Activated CD4-positive, alpha-beta memory T cell treated with anti-CD3 and anti-CD28 coated beads for 36 hours (primary cell): ENCODE measurements at regions of chr15 and their contacts with region 1.

Region 1: DNA sequence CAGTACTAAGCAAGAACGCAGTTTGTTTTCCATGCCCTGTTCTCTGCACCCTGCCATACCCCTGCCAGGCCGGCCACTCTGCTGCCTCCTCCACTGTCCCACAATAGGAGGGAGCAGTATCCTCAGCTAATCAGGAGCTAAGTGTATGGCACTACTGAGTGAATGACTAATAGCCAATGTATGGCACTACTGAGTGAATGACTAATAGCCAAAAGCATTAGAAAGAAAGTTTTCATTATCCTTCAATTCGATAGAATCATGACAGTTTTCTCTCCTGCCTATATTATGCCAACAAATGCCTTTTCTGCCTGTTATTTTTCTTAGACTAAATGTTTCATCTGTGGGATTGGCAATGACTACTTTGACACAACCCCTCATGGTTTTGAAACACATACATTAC is 107.5 kb upstream of the CHRM5 start:
- DNase-seq: no peak
- H3K4me3 Mint-ChIP-seq: no peak overlapping the region
- H3K27ac Mint-ChIP-seq: no peak overlapping the region
- H3K4me1 Mint-ChIP-seq: peaks cover 3% of the 10 kb centered on the region
- H3K27me3 Mint-ChIP-seq: no peaks in the 10 kb centered on the region

Region 2: DNA sequence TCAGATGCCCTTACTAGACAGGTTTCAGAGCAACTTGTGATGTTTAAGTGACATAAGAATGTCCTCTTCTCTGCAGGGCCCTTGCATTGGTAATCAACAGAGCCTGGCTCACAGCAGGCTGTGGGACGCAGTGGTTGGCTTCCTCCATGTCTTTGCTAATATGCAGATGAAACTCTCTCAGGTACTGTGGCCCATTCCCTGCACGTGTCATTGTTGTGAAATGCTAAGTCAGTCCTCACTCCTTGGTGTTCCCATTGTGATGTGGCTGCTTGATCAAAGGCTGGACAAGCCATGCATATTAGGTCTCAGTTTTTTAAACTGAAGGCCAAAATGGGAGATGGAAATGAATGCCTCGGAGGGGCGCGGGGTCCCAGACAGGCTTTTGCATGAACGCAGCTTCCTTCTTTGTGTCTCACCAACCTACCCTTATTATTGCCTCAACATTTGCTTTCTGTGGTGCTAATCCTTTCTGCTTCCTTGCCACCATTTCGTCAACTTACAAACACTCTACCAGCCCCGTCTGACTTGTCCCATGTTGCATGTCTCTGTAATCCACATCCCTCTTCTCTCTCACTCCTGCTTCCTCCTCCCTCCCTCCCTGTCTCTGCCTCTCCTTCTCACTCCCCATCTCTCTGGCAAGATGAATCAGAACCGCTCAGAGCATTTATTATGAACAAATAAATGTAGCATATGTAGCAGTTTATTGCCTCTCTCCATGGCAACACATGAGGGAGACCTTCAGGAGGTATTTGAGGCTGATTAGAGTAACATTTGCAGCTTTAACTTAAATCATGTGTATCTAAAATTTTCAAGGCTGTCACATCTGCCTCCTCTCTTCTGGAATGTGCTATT is 25.6 kb before region 1 on chr15:
- CTCF ChIA-PET with region 1: no interaction called
- POLR2A ChIA-PET with region 1: no interaction called
- intact Hi-C with region 1: no loop called
- DNase-seq: no peak
- H3K4me3 Mint-ChIP-seq: no peak overlapping the region
- H3K27ac Mint-ChIP-seq: no peak overlapping the region
- H3K4me1 Mint-ChIP-seq: no peaks in the 10 kb centered on the region
- H3K27me3 Mint-ChIP-seq: peaks cover 3% of the 10 kb centered on the region

Region 3: GRCh38 chr15:33915571-33916407 is 55.0 kb after region 1 on chr15:
- CTCF ChIA-PET with region 1: no interaction called
- POLR2A ChIA-PET with region 1: no interaction called
- intact Hi-C with region 1: loop called (anchors 10 kb)
- DNase-seq: no peak
- H3K4me3 Mint-ChIP-seq: no peak overlapping the region
- H3K27ac Mint-ChIP-seq: no peak overlapping the region
- H3K4me1 Mint-ChIP-seq: peaks cover 8% of the 10 kb centered on the region
- H3K27me3 Mint-ChIP-seq: no peaks in the 10 kb centered on the region